ENCODE measurements at regions of chr2 and their contacts with region 1.

Region 1: DNA sequence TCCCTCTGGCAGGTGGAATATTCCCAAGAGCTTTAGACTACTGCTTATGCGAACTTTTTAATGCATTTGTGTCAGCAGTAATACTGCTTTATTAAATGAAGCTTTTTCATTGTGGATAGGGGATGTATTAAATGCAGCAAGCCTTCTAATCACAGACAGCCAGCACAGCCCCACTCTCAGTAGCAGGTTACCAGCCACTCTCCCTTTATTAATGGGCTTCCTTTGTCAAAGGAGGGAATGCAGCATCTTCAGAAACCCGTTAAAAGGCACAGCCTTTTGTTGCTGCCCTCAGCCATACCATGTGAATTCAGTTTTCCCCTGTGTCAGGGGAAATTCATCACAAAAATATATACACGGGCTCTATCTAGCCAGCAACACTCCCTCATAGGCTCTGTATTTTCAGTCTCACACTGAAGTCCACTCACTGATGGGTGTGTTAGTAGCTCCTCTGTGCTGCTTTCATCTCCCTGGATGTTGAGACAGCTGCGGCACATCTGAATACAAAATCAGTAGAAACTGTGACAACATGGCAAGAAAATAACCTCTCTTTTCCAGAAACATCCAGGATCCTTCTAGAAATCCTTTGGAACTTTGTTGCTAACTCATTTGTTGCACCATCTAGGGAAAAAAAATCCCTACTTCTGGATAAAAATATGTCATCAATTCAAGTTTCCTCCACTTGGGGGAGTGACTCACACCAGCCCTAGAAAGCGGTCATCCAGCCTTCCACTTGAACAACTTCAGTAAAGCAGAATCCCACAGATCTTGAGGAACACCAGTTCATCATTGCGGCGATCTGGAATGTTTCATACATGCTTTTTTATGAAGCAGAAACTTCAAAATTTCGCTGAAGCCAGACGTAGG is 48.4 kb downstream of the LRRTM1 start:
- H3K4me3 ChIP-seq: no peak overlapping the region
- H3K27ac ChIP-seq: no peak overlapping the region
- H3K4me1 ChIP-seq: no peaks in the 10 kb centered on the region
- CTCF ChIP-seq: no peak

Region 2: DNA sequence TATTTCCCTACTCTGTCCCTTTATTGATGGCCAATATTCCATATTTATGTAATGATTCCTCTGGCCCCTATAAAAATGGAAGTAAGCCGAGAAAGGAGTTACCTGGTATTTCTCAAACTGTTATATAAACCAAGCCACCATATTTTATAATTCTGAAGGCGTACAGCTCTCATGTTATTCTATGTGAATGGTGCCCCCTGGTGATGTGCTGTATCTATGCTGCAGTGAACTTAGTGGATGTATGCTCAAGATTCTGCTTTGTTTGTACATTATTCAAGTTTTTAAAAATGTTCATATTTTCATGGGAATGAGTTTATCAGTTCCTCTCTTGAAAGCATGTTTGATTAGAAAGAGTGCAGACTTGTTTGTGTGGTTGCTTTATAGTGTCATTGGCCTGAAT is 242.9 kb after region 1 on chr2:
- CTCF ChIA-PET with region 1: interaction called, 20 read pairs
- POLR2A ChIA-PET with region 1: no interaction called
- H3K4me3 ChIP-seq: no peak overlapping the region
- H3K27ac ChIP-seq: no peak overlapping the region
- H3K4me1 ChIP-seq: no peaks in the 10 kb centered on the region
- CTCF ChIP-seq: no peak